Endothelial cell of umbilical vein (primary cell): ENCODE measurements at regions of chr5 and their contacts with region 1.

Region 1: GRCh38 chr5:44332285-44332971 is 56.8 kb downstream of the FGF10 start:
- DNase-seq: peak; percentile 52
- H3K4me3 ChIP-seq: no peak overlapping the region
- H3K27ac ChIP-seq: no peak overlapping the region
- H3K4me1 ChIP-seq: peaks cover 5% of the 10 kb centered on the region
- H3K27me3 ChIP-seq: no peaks in the 10 kb centered on the region
- CTCF ChIP-seq: peak; percentile 49 to 53
- POLR2A ChIP-seq: no peak

Region 2: GRCh38 chr5:43661102-43661501 is 671.3 kb before region 1 on chr5:
- CTCF ChIA-PET with region 1: interaction called, 6 read pairs
- POLR2A ChIA-PET with region 1: no interaction called
- dilution Hi-C with region 1: no loop called
- intact Hi-C with region 1: loop called (anchors 2 kb)
- DNase-seq: no peak
- H3K4me3 ChIP-seq: no peak overlapping the region
- H3K27ac ChIP-seq: no peak overlapping the region
- H3K4me1 ChIP-seq: no peaks in the 10 kb centered on the region
- H3K27me3 ChIP-seq: no peaks in the 10 kb centered on the region
- CTCF ChIP-seq: peak in 1 of 2 donors; percentile 18
- POLR2A ChIP-seq: no peak

Region 3: GRCh38 chr5:43729846-43730478 is 602.5 kb before region 1 on chr5:
- CTCF ChIA-PET with region 1: interaction called, 27 read pairs
- POLR2A ChIA-PET with region 1: interaction called, 3 read pairs
- dilution Hi-C with region 1: no loop called
- intact Hi-C with region 1: loop called (anchors 2 kb)
- DNase-seq: peak; percentile 18
- H3K4me3 ChIP-seq: no peak overlapping the region
- H3K27ac ChIP-seq: no peak overlapping the region
- H3K4me1 ChIP-seq: no peaks in the 10 kb centered on the region
- H3K27me3 ChIP-seq: peaks cover 2 to 7% of the 10 kb centered on the region in 2 experiments
- CTCF ChIP-seq: peak; percentile 16 to 20
- POLR2A ChIP-seq: no peak

Region 4: DNA sequence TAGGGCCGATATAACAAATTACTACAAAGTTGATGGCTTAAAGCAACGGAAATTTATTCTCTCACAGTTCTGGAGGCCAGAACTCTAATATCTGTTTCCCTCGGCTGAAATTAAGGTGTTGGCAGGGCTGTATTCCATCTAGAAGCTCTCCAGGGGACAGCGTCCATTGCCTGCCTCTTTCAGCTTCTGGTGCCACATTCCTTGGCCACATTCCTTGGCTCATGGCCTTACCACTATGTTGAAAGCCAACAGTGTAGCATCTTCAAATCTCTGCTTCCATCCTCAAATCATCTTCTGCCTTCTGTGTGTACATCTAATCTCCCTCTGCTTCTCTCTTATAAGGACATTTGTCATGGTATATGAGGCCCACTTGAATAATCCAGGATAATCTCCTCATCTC is 39.6 kb after region 1 on chr5:
- CTCF ChIA-PET with region 1: no interaction called
- POLR2A ChIA-PET with region 1: no interaction called
- dilution Hi-C with region 1: no loop called
- intact Hi-C with region 1: no loop called
- DNase-seq: no peak
- H3K4me3 ChIP-seq: no peak overlapping the region
- H3K27ac ChIP-seq: no peak overlapping the region
- H3K4me1 ChIP-seq: no peaks in the 10 kb centered on the region
- H3K27me3 ChIP-seq: no peaks in the 10 kb centered on the region
- CTCF ChIP-seq: no peak
- POLR2A ChIP-seq: no peak